Endothelial cell of umbilical vein (primary cell): ENCODE measurements at regions of chr6 and their contacts with region 1.

Region 1: DNA sequence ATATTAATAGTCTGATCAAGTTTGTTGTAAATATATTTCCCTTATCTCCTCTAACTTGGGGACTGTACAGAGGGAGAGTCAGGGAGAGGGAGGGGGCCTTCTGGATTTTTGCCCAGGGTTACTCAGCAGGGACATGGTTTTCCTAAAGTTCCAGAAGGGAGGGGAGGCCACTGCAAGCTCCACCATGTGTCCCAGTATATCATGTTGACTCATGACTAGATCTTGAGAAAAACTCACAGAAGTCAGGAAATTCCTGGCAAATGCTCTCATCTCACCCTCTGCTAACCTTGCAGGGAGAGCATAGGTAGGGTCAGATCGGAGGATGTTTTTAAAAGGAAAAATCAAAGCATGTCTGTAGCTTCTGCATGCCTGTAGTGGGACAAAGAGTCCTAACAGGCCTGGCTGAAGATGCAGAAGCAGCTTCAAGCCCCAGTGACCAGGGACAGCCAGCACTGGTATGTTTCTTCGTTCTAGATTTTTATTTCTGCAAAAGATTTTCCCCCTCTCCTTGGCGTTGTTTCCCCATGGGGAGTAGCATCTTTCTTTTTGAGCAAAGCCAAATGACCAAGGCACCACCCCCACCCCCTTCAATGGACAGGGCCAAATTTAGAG is 272.9 kb upstream of the SUPT3H start:
- DNase-seq: peak; percentile 89
- H3K4me3 ChIP-seq: no peak overlapping the region
- H3K27ac ChIP-seq: peak overlapping the region; percentile 26
- H3K4me1 ChIP-seq: peaks cover 41% of the 10 kb centered on the region
- H3K27me3 ChIP-seq: no peaks in the 10 kb centered on the region
- CTCF ChIP-seq: no peak
- POLR2A ChIP-seq: peak; percentile 64

Region 2: DNA sequence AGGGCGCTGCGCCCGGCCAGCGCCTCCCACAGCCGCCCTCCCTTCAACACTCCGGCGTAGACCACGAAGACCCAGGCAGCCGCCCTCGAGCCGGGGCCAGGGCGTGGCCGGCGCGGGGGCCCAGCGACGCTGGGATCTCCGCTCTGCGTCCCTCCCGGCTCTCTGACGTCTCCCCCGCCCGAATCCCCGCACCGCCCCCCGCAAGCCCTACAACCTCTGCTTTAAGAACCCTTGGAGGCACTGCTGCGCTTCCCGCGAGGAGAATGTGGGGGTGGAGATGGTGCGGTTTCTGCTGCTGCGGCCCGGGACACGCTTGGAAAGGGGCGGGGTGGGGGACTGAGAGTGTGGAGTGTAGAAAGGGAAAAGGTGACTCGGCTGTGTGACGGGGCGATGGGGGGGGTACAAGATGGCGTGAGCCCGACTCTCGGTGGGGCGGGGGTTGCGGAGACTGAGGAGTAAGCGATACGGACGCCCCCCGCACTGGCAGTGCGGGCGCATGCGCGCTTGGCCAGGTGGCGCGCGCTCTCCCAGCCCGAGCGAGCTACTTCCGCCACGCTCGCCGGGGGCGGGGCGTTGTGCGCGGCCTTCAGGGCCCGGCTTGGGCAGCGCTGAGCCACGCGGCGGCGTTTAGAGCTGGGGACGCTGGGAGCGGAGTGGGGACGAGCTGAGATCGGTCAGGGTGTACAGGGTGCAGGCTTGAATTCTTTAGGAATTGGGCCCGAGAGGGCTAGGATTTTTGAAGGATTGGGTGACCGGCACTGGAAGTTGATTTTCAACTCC is 272.9 kb before region 1 on chr6 and contains the start of gene SUPT3H:
- CTCF ChIA-PET with region 1: no interaction called
- POLR2A ChIA-PET with region 1: interaction called, 3 read pairs
- dilution Hi-C with region 1: no loop called
- intact Hi-C with region 1: loop called (anchors 1 kb)
- DNase-seq: peak; percentile 94
- H3K4me3 ChIP-seq: peak within 1 kb of the TSS; percentile 76 to 92 (median 79)
- H3K27ac ChIP-seq: peak within 1 kb of the TSS; percentile 91
- H3K4me1 ChIP-seq: peaks cover 8% of the 10 kb centered on the region
- H3K27me3 ChIP-seq: no peaks in the 10 kb centered on the region
- CTCF ChIP-seq: peak in 1 of 2 donors; percentile 26
- POLR2A ChIP-seq: peak; percentile 87
- total RNA-seq, gene SUPT3H: 8.4 and 9.8 TPM in 2 replicates

Region 3: GRCh38 chr6:45479834-45480751 is 170.5 kb before region 1 on chr6:
- CTCF ChIA-PET with region 1: no interaction called
- POLR2A ChIA-PET with region 1: no interaction called
- dilution Hi-C with region 1: no loop called
- intact Hi-C with region 1: loop called (anchors 2 kb)
- DNase-seq: peak; percentile 71
- H3K4me3 ChIP-seq: no peak overlapping the region
- H3K27ac ChIP-seq: no peak overlapping the region
- H3K4me1 ChIP-seq: peaks cover 23% of the 10 kb centered on the region
- H3K27me3 ChIP-seq: no peaks in the 10 kb centered on the region
- CTCF ChIP-seq: no peak
- POLR2A ChIP-seq: no peak

Region 4: DNA sequence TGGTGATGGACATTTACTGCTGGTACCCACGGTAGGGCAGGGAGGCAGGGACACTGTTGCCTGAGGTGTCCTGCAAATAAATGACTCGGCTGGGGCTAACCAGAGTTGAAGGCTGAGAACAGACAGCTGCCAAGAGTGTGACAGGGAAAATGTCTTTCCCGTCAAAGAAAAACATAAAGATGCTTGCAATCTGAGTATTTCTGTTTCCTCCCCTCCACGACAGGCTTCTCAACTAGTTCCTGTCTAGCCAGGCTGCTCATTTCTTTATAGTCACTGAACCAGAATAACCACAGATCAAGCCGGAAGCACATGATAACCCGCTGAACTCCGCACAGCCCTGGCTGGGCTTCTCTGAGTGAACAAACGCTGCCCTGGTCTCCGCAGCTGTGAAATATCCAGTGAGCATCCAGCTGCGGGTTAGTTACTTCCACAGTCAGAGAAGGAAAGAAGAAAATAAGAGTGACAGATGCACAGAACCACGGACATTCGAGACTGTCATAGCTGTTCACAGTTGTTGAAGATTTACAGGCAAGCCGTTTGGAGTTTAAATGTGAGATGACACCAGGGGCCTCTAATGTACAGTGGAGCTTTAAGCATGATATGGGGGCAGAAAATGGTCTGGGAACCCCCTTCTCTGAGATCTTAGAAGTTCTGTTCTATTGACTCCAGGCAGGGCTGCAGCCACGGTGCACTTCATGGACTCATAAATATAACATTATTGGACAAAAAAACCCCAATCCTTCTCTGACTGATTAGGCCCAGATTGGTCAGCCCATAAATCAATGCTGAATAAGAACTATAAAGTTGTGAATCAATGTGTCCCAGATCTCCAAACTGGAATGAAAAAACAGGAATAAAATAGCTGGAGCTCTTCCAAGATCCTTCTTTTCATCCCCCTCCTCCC is 27.0 kb after region 1 on chr6:
- CTCF ChIA-PET with region 1: no interaction called
- POLR2A ChIA-PET with region 1: no interaction called
- dilution Hi-C with region 1: no loop called
- intact Hi-C with region 1: loop called (anchors 1 kb)
- DNase-seq: peak; percentile 90
- H3K4me3 ChIP-seq: peak overlapping the region in 1 of 3 experiments; percentile 16
- H3K27ac ChIP-seq: peak overlapping the region; percentile 87
- H3K4me1 ChIP-seq: peaks cover 15% of the 10 kb centered on the region
- H3K27me3 ChIP-seq: no peaks in the 10 kb centered on the region
- CTCF ChIP-seq: no peak
- POLR2A ChIP-seq: peak; percentile 42